ENCODE measurements at regions of chr11 and their contacts with region 1.

Region 1: GRCh38 chr11:61315260-61315659 is 17.6 kb downstream of the DDB1 start:
- DNase-seq: no peak
- H3K4me3 ChIP-seq: no peak overlapping the region
- H3K27ac ChIP-seq: no peak overlapping the region
- H3K4me1 ChIP-seq: no peaks in the 10 kb centered on the region
- H3K27me3 ChIP-seq: no peaks in the 10 kb centered on the region
- CTCF ChIP-seq: no peak

Region 2: DNA sequence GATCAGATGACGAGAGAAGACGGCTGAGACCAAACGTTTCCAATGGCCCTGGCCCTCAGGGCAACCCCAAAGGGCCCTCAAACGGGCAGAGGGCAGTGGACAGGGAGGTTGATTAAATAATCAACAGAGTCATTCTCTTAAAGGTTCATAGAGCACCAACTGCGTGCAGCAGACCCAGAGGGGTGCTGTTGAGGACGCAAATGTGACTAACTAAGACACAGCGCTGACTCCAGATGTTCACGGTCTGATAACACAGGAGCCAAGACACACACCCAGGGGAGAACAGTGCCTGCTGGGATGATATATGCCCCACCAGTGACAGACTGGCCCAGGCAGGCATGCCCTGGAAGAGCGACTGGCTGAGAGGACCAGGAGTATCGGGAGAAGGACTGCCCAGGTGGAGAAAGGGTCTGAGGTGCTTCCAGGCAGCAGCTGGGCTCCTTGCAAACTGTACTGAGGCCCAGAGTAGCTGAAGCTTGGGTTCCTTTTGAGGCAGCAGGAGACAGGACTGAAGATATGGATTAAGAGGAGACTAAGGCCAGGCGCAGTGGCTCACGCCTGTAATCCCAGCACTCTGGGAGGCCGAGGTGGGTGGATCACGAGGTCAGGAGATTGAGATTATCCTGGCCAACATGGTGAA is 27.8 kb before region 1 on chr11:
- CTCF ChIA-PET with region 1: interaction called, 14 read pairs
- POLR2A ChIA-PET with region 1: no interaction called
- intact Hi-C with region 1: no loop called
- DNase-seq: no peak
- H3K4me3 ChIP-seq: no peak overlapping the region
- H3K27ac ChIP-seq: no peak overlapping the region
- H3K4me1 ChIP-seq: no peaks in the 10 kb centered on the region
- H3K27me3 ChIP-seq: no peaks in the 10 kb centered on the region
- CTCF ChIP-seq: no peak

Region 3: DNA sequence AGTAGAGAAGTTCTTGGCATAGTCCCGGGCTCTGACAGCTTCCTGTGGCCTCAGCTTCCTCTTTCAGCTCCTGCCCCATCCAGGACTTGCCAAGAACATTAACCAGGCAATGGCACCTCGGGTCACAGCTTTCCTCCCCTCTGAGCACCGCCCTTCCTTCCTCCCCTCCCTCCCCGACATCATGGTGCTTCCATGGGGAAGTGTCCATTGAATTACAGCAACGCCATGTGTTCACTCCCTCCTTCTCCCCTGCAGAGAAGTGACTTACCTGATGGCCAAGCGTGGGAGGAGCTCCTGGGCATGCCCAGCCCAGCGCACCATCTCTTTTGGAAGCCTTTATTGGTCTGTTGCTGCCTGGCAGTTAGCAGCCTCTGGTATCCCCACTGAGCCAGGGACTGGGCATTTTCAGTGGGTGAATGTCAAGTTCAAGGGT is 339.2 kb after region 1 on chr11:
- CTCF ChIA-PET with region 1: no interaction called
- POLR2A ChIA-PET with region 1: interaction called, 39 read pairs
- intact Hi-C with region 1: no loop called
- DNase-seq: no peak
- H3K4me3 ChIP-seq: no peak overlapping the region
- H3K27ac ChIP-seq: no peak overlapping the region
- H3K4me1 ChIP-seq: no peaks in the 10 kb centered on the region
- H3K27me3 ChIP-seq: peaks cover 18% of the 10 kb centered on the region; the same call in 1 of the 2 replicates
- CTCF ChIP-seq: no peak

Measured in PC-9 (cell line).